PC-9 (cell line): ENCODE measurements at regions of chr5 and their contacts with region 1.

Region 1: DNA sequence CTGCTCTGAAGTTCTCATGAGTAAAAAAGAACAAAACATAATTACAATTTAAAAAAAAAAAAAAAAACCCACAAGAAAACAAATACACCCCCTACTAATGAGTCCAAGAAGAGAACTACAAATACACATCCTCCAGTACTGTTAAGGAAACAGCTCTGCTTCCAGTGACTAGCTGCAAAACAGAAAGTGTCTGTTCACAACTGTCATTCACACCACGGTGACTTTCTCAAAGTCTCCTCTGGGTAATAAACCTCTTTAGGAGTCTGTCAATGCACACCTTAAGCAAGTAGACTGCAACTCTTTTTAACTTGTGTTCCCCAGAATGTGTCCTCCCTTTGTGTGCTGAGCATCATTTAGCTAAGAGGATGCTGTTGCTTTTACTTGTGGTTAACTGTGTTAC is 6.2 kb downstream of the REEP5 start:
- DNase-seq: no peak
- H3K4me3 ChIP-seq: no peak overlapping the region
- H3K27ac ChIP-seq: no peak overlapping the region
- H3K4me1 ChIP-seq: peaks cover 10% of the 10 kb centered on the region; the same call in 1 of the 2 replicates
- H3K27me3 ChIP-seq: no peaks in the 10 kb centered on the region
- CTCF ChIP-seq: no peak

Region 2: DNA sequence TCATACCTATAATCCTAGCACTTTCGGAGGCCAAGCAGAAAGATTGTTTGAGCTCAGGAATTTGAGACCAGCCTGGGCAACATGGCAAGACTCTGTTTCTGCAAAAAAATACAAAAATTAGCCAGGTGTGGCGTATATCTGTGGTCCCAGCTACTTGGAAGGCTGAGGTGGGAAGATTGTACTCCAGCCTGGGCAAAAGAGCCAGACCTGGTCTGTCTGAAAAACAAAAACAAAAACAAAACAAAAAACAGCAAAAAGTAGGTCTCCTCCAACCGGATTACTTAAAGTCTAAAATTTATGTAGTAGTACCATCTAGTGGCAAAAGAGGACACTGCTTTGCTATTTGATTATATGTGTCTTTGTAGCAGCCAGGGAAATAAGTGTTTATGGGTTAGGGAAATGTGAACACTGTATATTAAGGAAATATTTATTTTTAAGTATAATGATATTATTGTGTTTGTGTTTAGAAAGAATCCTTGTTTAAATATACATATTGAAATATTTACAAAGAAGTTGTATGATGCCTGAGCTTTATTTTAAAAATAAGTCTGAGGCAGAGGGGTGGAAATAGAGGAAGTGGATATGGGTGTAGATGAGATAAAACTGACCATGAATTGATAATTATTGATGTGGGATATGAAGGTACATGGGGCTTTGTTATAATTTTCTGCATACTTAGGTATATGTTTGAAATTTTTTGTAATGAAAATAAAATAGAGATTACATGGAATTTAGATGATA is 158.2 kb before region 1 on chr5:
- CTCF ChIA-PET with region 1: interaction called, 11 read pairs
- POLR2A ChIA-PET with region 1: no interaction called
- intact Hi-C with region 1: no loop called
- DNase-seq: peak; percentile 1 to 54
- H3K4me3 ChIP-seq: no peak overlapping the region
- H3K27ac ChIP-seq: no peak overlapping the region
- H3K4me1 ChIP-seq: no peaks in the 10 kb centered on the region
- H3K27me3 ChIP-seq: no peaks in the 10 kb centered on the region
- CTCF ChIP-seq: peak; percentile 85